CD4-positive, alpha-beta T cell (primary cell): ENCODE measurements at regions of chr1 and their contacts with region 1.

Region 1: GRCh38 chr1:201149400-201149799 is 4.9 kb downstream of the TMEM9 start:
- DNase-seq: peak in 3 of 14 experiments; percentile 8 to 41 (median 30)
- ATAC-seq: no peak
- H3K4me3 ChIP-seq: no peak overlapping the region
- H3K4me3 Mint-ChIP-seq: peak overlapping the region; percentile 30
- H3K27ac ChIP-seq: no peak overlapping the region
- H3K27ac Mint-ChIP-seq: no peak overlapping the region
- H3K4me1 ChIP-seq: peaks cover 11% of the 10 kb centered on the region
- H3K4me1 Mint-ChIP-seq: peaks cover 31% of the 10 kb centered on the region
- H3K27me3 ChIP-seq: no peaks in the 10 kb centered on the region
- H3K27me3 Mint-ChIP-seq: no peaks in the 10 kb centered on the region
- CTCF ChIP-seq: peak; percentile 62

Region 2: GRCh38 chr1:201104141-201104540 is 45.3 kb before region 1 on chr1:
- CTCF ChIA-PET with region 1: no interaction called
- POLR2A ChIA-PET with region 1: no interaction called
- intact Hi-C with region 1: no loop called
- DNase-seq: no peak
- ATAC-seq: no peak
- H3K4me3 ChIP-seq: no peak overlapping the region
- H3K4me3 Mint-ChIP-seq: no peak overlapping the region
- H3K27ac ChIP-seq: no peak overlapping the region
- H3K27ac Mint-ChIP-seq: no peak overlapping the region
- H3K4me1 ChIP-seq: no peaks in the 10 kb centered on the region
- H3K4me1 Mint-ChIP-seq: no peaks in the 10 kb centered on the region
- H3K27me3 ChIP-seq: no peaks in the 10 kb centered on the region
- H3K27me3 Mint-ChIP-seq: no peaks in the 10 kb centered on the region
- CTCF ChIP-seq: no peak

Region 3: DNA sequence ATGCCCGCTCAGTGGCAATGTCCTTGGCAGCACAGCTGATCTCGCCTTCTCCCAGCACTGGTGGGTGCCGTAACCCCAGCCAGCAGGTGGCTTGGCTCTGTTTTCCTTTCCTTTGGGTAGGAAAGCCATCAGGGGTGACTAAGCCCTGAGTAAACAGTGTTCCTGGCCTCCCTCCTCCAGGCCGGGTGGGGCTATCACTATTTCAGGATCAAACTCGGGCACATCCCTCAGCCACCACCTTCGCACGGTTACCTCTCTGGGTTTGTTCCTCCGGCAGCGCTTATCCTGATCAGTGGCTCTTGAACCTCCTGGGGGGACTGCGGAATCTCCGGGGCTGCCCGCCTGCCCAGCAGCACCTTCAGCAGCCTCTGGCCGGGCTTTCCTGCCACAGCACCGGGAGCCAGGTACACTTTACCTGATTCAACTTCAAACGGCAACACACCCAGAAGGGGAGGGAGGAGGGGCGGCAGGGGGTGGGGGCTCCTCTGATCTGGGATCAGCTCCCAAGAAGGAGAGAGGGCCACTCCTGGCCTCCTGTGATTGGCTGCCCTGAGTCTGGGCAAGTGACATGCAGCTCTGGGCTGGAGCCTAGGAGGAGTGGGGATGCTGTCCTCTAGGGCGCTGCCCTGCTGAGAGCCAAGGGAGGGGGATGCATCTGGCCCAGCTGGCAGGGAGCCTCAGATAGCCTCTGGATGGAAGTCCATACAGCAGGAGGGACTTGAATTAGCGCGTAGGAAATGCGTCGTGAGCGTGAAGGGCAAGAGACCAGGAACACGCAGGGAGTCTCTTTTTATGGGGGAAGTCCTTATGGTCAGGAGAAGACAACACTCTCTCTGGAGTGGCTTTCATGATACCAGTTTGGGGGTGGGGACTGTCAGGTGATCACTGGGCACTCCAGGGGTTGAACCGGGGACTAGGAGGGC is 22.3 kb before region 1 on chr1 and contains the start of gene ASCL5:
- CTCF ChIA-PET with region 1: no interaction called
- POLR2A ChIA-PET with region 1: no interaction called
- intact Hi-C with region 1: loop called in 1 of 2 experiments (anchors 1 kb)
- DNase-seq: no peak
- ATAC-seq: no peak
- H3K4me3 ChIP-seq: no peak within 1 kb of the TSS
- H3K4me3 Mint-ChIP-seq: no peak within 1 kb of the TSS
- H3K27ac ChIP-seq: no peak within 1 kb of the TSS
- H3K27ac Mint-ChIP-seq: no peak within 1 kb of the TSS
- H3K4me1 ChIP-seq: no peaks in the 10 kb centered on the region
- H3K4me1 Mint-ChIP-seq: no peaks in the 10 kb centered on the region
- H3K27me3 ChIP-seq: peaks cover 9 to 10% of the 10 kb centered on the region in 2 experiments
- H3K27me3 Mint-ChIP-seq: peaks cover 28% of the 10 kb centered on the region
- CTCF ChIP-seq: no peak
- total RNA-seq, gene ASCL5: 0.49 to 0.50 TPM

Region 4: DNA sequence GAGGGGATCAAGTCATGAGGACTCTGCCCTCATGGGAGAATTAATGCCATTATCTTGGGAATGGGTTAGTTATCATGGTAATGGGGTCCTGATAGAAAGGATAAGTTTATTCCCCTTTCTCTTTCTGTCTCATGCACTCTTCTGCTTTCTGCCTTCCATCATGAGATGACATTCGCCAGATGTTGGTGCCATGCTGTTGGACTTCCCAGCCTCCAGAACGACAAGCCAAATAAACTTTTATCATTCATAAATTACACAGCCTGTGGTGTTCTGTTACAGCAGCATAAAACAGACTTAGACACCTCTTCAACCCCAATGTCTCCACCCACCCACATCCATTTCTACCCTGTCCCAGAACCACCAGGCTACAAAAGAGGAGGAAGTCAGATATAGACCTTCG is 29.3 kb after region 1 on chr1:
- CTCF ChIA-PET with region 1: no interaction called
- POLR2A ChIA-PET with region 1: no interaction called
- intact Hi-C with region 1: no loop called
- DNase-seq: no peak
- ATAC-seq: no peak
- H3K4me3 ChIP-seq: no peak overlapping the region
- H3K4me3 Mint-ChIP-seq: no peak overlapping the region
- H3K27ac ChIP-seq: no peak overlapping the region
- H3K27ac Mint-ChIP-seq: no peak overlapping the region
- H3K4me1 ChIP-seq: no peaks in the 10 kb centered on the region
- H3K4me1 Mint-ChIP-seq: no peaks in the 10 kb centered on the region
- H3K27me3 ChIP-seq: peaks cover 4 to 16% of the 10 kb centered on the region in 2 experiments
- H3K27me3 Mint-ChIP-seq: peaks cover 52% of the 10 kb centered on the region
- CTCF ChIP-seq: no peak

Region 5: GRCh38 chr1:201224666-201225370 is 75.4 kb after region 1 on chr1:
- CTCF ChIA-PET with region 1: interaction called, 6 read pairs
- POLR2A ChIA-PET with region 1: no interaction called
- intact Hi-C with region 1: loop called (anchors 2 to 5 kb)
- DNase-seq: peak in 1 of 14 experiments; percentile 27
- ATAC-seq: no peak
- H3K4me3 ChIP-seq: no peak overlapping the region
- H3K4me3 Mint-ChIP-seq: no peak overlapping the region
- H3K27ac ChIP-seq: no peak overlapping the region
- H3K27ac Mint-ChIP-seq: no peak overlapping the region
- H3K4me1 ChIP-seq: no peaks in the 10 kb centered on the region
- H3K4me1 Mint-ChIP-seq: no peaks in the 10 kb centered on the region
- H3K27me3 ChIP-seq: peaks cover 2 to 11% of the 10 kb centered on the region in 2 experiments
- H3K27me3 Mint-ChIP-seq: peaks cover 13% of the 10 kb centered on the region
- CTCF ChIP-seq: no peak